ENCODE measurements at regions of chr9 and their contacts with region 1.

Region 1: DNA sequence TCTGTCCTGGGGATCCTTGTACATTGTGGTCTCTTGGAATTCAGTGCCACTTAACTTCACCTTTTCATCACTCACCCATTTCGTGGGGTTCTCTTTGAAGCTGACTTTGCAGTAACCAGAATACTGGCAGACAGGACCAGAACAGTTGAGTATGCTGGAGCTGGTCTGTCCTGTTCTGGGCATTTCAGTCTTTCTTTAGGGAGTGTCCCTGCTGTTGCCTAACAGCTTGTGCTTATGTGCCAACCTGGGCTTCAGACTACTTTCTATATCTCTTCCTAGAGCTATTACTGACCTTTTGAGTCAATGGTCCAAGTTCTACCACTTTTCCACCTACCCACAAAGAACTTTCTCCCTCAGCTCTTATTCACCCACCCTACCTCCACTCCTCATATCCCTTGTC is 10.0 kb upstream of the INSL6 start:
- DNase-seq: no peak
- ATAC-seq: no peak
- H3K4me3 ChIP-seq: no peak overlapping the region
- H3K4me3 Mint-ChIP-seq: no peak overlapping the region
- H3K27ac ChIP-seq: no peak overlapping the region
- H3K27ac Mint-ChIP-seq: no peak overlapping the region
- H3K4me1 ChIP-seq: no peaks in the 10 kb centered on the region
- H3K4me1 Mint-ChIP-seq: no peaks in the 10 kb centered on the region
- H3K27me3 ChIP-seq: no peaks in the 10 kb centered on the region
- H3K27me3 Mint-ChIP-seq: peaks cover 3% of the 10 kb centered on the region
- CTCF ChIP-seq: no peak

Region 2: DNA sequence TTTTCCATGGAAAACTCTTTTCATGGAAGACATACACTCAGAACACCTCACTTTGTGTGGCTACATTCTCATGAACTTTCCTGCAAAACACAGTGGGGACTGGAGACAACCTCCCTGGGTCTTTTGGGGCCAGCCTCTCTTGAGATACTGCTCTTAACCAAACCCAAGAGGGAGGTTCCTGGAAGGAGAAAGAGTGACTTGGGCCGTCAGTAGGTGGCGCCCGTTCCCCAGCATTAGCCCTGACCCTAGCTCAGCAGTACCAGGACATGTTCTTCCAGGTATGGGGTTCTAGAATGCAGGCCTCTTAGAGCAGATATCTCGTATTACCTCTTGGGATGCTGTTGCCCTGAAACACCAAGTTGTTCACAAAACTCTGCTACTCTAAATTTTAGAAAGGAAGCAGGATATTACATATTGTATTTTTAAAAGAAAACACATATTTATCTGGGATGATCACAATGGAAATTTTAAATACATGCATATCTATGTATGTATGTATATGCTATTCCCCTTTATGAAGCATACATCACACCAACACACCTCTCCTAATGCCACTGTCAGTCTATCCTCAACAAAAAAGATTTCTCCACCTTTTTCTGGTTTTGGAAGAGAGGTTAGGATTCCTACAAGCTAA is 879.8 kb before region 1 on chr9:
- CTCF ChIA-PET with region 1: no interaction called
- POLR2A ChIA-PET with region 1: no interaction called
- intact Hi-C with region 1: no loop called
- DNase-seq: peak; percentile 42 to 85 (median 72)
- ATAC-seq: peak; percentile 90
- H3K4me3 ChIP-seq: no peak overlapping the region
- H3K4me3 Mint-ChIP-seq: no peak overlapping the region
- H3K27ac ChIP-seq: no peak overlapping the region
- H3K27ac Mint-ChIP-seq: no peak overlapping the region
- H3K4me1 ChIP-seq: peaks cover 19% of the 10 kb centered on the region
- H3K4me1 Mint-ChIP-seq: peaks cover 19% of the 10 kb centered on the region
- H3K27me3 ChIP-seq: no peaks in the 10 kb centered on the region
- H3K27me3 Mint-ChIP-seq: peaks cover 5% of the 10 kb centered on the region
- CTCF ChIP-seq: peak; percentile 76

Region 3: GRCh38 chr9:4923580-4924544 is 271.6 kb before region 1 on chr9:
- CTCF ChIA-PET with region 1: no interaction called
- POLR2A ChIA-PET with region 1: no interaction called
- intact Hi-C with region 1: no loop called
- DNase-seq: peak in 3 of 9 experiments; percentile 9 to 55 (median 49)
- ATAC-seq: peak; percentile 46
- H3K4me3 ChIP-seq: no peak overlapping the region
- H3K4me3 Mint-ChIP-seq: no peak overlapping the region
- H3K27ac ChIP-seq: no peak overlapping the region
- H3K27ac Mint-ChIP-seq: no peak overlapping the region
- H3K4me1 ChIP-seq: no peaks in the 10 kb centered on the region
- H3K4me1 Mint-ChIP-seq: peaks cover 2% of the 10 kb centered on the region
- H3K27me3 ChIP-seq: no peaks in the 10 kb centered on the region
- H3K27me3 Mint-ChIP-seq: no peaks in the 10 kb centered on the region
- CTCF ChIP-seq: peak; percentile 37

Region 4: DNA sequence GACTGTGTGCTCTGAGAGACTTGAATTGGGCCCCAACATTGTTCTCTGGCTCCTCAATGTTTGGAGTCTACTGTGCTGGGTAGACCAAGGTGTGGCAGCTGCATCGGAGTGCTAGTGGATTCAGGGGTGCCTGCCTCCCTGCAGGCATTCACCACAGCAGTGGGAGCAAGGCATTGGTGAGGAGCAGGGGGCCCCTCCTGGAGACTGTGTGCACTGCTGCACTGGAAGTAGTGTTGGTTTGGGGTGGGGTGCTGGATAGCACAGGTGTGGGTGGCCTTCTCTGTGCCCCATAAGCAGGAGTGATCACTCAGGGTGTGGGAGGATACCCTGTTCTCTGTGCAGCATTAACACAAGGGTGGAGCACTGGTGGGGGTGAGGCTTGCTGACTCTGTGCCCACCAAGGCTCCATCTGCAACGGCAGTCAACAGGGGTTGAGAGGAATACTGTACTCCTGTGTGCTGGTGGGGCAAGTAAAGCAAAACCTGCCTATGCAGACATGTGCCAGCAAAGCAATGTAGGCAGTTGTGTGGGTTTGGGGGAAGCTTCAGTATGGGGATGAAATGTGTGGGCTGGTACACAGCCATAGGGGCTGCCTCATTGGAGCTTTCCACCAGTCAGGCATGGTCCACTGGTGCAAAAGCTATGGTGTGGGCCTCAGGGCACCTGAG is 49.1 kb before region 1 on chr9:
- CTCF ChIA-PET with region 1: no interaction called
- POLR2A ChIA-PET with region 1: no interaction called
- intact Hi-C with region 1: no loop called
- DNase-seq: no peak
- ATAC-seq: no peak
- H3K4me3 ChIP-seq: no peak overlapping the region
- H3K4me3 Mint-ChIP-seq: no peak overlapping the region
- H3K27ac ChIP-seq: no peak overlapping the region
- H3K27ac Mint-ChIP-seq: no peak overlapping the region
- H3K4me1 ChIP-seq: no peaks in the 10 kb centered on the region
- H3K4me1 Mint-ChIP-seq: no peaks in the 10 kb centered on the region
- H3K27me3 ChIP-seq: no peaks in the 10 kb centered on the region
- H3K27me3 Mint-ChIP-seq: no peaks in the 10 kb centered on the region
- CTCF ChIP-seq: no peak

Region 5: GRCh38 chr9:5288591-5288990 is 93.1 kb after region 1 on chr9:
- CTCF ChIA-PET with region 1: no interaction called
- POLR2A ChIA-PET with region 1: no interaction called
- intact Hi-C with region 1: loop called in 1 of 2 experiments (anchors 10 kb)
- DNase-seq: no peak
- ATAC-seq: no peak
- H3K4me3 ChIP-seq: no peak overlapping the region
- H3K4me3 Mint-ChIP-seq: no peak overlapping the region
- H3K27ac ChIP-seq: no peak overlapping the region
- H3K27ac Mint-ChIP-seq: no peak overlapping the region
- H3K4me1 ChIP-seq: no peaks in the 10 kb centered on the region
- H3K4me1 Mint-ChIP-seq: no peaks in the 10 kb centered on the region
- H3K27me3 ChIP-seq: no peaks in the 10 kb centered on the region
- H3K27me3 Mint-ChIP-seq: no peaks in the 10 kb centered on the region
- CTCF ChIP-seq: no peak